ENCODE measurements at regions of chr13 and their contacts with region 1.

Region 1: DNA sequence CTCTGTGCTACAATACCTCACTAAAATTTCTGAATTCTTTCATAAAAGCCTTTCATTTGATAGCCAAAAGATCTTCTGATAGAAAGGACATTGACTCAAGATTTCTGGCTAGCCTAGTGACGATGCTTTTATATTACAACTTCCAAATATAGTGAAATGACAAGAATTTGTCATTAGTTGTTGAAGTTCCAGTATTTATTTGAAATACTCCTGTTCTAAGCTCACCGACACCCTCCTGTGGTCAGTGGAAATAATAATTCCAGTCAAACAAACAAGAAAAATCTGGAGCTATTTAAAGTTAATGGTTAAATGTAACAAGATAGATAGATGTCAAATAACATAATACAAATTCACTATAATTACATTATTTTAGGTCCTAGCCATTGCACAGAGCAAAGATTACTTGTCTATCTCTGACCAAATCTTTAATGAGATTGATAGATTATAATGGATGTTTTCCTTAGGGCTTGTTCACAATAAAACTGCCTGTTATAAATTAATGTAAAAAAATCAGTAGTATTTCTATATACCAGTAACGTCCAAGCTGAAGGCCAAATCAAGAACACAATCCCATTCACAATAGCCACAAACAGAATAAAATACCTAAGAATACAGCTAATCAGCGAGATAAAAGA is 195.5 kb downstream of the RGCC start:
- DNase-seq: peak; percentile 55
- ATAC-seq: no peak
- H3K4me3 Mint-ChIP-seq: no peak overlapping the region
- H3K27ac Mint-ChIP-seq: no peak overlapping the region
- H3K4me1 Mint-ChIP-seq: peaks cover 23% of the 10 kb centered on the region
- H3K27me3 Mint-ChIP-seq: no peaks in the 10 kb centered on the region

Region 2: DNA sequence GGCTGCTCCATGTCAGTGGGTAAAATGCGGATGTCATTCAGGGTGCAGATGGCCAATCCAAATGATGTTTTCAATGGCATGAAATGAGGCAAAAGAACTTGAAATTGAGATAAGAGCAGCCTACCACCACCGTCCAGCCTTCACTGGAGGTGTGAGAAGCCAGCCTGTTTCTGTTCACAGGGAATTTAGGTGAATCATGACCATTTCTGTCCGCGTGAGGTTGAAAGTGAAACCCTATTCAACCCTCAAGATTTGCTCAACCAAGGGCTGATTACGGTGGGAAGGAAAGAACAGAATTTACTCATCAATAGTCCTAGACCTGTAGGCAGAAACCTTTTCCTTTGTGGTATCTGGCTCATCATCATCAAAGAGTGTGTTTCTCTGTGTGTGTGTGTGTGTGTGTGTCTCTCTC is 1626.7 kb before region 1 on chr13:
- CTCF ChIA-PET with region 1: no interaction called
- POLR2A ChIA-PET with region 1: no interaction called
- intact Hi-C with region 1: no loop called
- DNase-seq: peak; percentile 79
- ATAC-seq: peak; percentile 82
- H3K4me3 Mint-ChIP-seq: peak overlapping the region; percentile 25
- H3K27ac Mint-ChIP-seq: peak overlapping the region; percentile 28
- H3K4me1 Mint-ChIP-seq: peaks cover 48% of the 10 kb centered on the region
- H3K27me3 Mint-ChIP-seq: no peaks in the 10 kb centered on the region

Region 3: GRCh38 chr13:41352935-41353840 is 299.7 kb before region 1 on chr13:
- CTCF ChIA-PET with region 1: interaction called, 5 read pairs
- POLR2A ChIA-PET with region 1: no interaction called
- intact Hi-C with region 1: loop called (anchors 1 to 2 kb)
- DNase-seq: peak; percentile 55
- ATAC-seq: peak; percentile 54
- H3K4me3 Mint-ChIP-seq: no peak overlapping the region
- H3K27ac Mint-ChIP-seq: peak overlapping the region; percentile 78
- H3K4me1 Mint-ChIP-seq: peaks cover 55% of the 10 kb centered on the region
- H3K27me3 Mint-ChIP-seq: no peaks in the 10 kb centered on the region

Region 4: DNA sequence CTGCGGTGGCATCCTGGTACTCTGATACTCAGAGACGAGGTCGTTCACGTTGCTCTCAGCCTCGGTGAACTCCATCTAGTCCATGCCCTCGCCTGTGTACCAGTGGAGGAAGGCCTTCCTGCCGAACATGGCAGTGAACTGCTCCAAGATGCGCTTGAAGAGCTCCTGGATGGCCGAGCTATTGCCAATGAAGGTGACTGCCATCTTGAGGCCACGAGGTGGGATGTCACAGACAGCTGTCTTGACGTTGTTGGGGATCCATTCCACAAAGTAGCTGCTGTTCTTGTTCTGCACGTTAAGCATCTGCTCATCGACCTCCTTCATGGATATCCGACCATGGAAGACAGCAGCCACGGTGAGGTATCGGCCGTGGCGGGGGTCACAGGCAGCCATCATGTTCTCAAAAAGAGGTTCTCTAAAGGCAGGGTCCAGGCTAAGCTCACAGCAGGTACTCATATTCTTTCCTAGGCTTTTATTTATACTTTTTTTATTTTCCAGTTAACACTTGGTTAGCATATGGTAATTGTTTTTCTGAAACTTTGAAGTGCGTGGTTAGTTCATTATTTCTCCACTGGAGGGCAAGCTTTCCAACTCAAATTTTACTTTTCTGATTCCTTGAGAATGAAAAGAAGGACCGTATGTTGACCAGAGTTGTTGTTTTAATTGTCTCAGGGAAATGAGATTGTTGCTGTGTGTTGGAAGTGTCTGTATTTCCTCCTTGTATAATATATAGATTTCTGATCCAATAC is 267.9 kb before region 1 on chr13:
- CTCF ChIA-PET with region 1: interaction called, 7 read pairs
- POLR2A ChIA-PET with region 1: no interaction called
- intact Hi-C with region 1: loop called in 1 of 2 experiments (anchors 10 kb)
- DNase-seq: peak; percentile 9
- ATAC-seq: no peak
- H3K4me3 Mint-ChIP-seq: no peak overlapping the region
- H3K27ac Mint-ChIP-seq: no peak overlapping the region
- H3K4me1 Mint-ChIP-seq: peaks cover 26% of the 10 kb centered on the region
- H3K27me3 Mint-ChIP-seq: no peaks in the 10 kb centered on the region

Region 5: DNA sequence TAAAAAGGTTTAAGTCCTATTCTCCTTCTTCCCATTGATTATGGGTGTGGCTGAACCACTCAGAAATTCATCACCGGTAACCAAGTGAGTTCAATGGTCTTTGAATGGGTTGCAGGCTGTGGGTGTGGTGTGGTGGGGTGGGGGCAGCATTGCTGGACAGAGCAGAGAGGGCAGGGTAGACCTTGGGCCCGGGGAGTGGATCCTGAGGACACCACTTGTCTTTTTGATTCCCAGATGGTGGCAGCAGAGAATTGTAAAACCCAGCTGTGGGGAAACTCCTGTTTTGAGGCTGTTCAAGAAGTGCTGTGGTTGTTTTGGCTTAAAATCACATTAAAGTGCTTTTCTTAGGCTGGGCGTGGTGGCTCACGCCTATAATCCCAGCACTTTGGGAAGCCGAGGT is 241.3 kb before region 1 on chr13:
- CTCF ChIA-PET with region 1: interaction called, 6 read pairs
- POLR2A ChIA-PET with region 1: no interaction called
- intact Hi-C with region 1: loop called (anchors 1 to 2 kb)
- DNase-seq: peak; percentile 42
- ATAC-seq: peak; percentile 65
- H3K4me3 Mint-ChIP-seq: no peak overlapping the region
- H3K27ac Mint-ChIP-seq: no peak overlapping the region
- H3K4me1 Mint-ChIP-seq: peaks cover 2% of the 10 kb centered on the region
- H3K27me3 Mint-ChIP-seq: no peaks in the 10 kb centered on the region

Region 6: GRCh38 chr13:41428155-41428554 is 224.7 kb before region 1 on chr13:
- CTCF ChIA-PET with region 1: no interaction called
- POLR2A ChIA-PET with region 1: no interaction called
- intact Hi-C with region 1: loop called in 1 of 2 experiments (anchors 5 kb)
- DNase-seq: peak; percentile 65
- ATAC-seq: peak; percentile 75
- H3K4me3 Mint-ChIP-seq: no peak overlapping the region
- H3K27ac Mint-ChIP-seq: no peak overlapping the region
- H3K4me1 Mint-ChIP-seq: peaks cover 6% of the 10 kb centered on the region
- H3K27me3 Mint-ChIP-seq: peaks cover 3% of the 10 kb centered on the region

Region 7: DNA sequence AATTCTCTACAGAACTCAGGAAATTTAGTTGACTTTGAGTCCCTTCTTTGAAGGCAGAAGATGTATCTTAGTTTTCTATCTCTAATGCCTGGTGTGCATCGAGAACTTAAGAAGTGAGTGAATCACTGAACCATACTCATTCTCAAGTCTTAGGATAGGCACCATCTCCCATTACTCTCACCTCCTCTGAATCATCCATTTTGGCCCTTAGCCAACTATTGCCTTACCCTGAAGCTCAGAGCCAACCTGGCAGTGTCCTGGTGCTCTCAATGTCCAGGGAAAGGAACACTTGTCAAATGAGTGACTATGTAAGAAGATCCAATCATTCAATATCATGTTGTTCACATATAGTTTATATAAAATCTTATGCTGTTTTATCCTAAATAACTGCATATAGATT is 48.9 kb before region 1 on chr13:
- CTCF ChIA-PET with region 1: no interaction called
- POLR2A ChIA-PET with region 1: no interaction called
- intact Hi-C with region 1: no loop called
- DNase-seq: peak; percentile 8
- ATAC-seq: peak; percentile 71
- H3K4me3 Mint-ChIP-seq: no peak overlapping the region
- H3K27ac Mint-ChIP-seq: no peak overlapping the region
- H3K4me1 Mint-ChIP-seq: no peaks in the 10 kb centered on the region
- H3K27me3 Mint-ChIP-seq: no peaks in the 10 kb centered on the region

Region 8: DNA sequence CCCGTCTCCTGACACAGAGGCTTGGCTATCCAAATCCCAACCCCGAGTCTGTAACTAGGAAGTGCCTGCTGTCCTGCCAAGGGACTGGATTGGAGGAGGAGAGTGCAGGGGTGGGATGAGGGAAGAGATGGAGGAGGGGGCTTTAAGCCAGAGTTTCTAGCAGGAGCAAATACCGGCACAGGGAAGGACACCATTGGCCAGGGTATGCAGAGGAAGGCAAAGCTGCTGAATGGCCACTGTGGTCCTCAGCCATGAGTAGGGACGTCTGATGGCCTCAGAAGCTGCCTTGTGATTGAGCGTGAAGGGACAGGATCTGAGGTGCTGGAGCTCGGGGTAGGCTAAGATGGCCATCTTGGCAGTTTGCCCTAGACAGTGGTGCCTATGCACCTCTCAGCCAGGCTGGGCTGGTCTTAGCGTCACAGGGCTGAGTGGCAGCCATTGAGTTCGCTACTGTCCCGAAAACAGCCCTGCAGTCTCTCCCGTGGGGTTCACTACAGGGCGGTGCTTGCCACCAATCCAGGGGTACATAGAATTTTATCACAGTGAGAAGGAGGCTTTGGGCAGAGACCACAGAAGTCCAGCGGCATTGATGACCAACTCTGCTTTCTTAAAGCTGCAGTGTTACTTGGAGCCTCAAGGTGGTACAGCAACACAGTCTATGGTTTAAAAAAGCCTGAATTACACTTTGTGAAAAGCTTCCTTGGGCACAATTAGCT is 680.9 kb after region 1 on chr13:
- CTCF ChIA-PET with region 1: no interaction called
- POLR2A ChIA-PET with region 1: no interaction called
- intact Hi-C with region 1: no loop called
- DNase-seq: no peak
- ATAC-seq: peak; percentile 79
- H3K4me3 Mint-ChIP-seq: no peak overlapping the region
- H3K27ac Mint-ChIP-seq: peak overlapping the region; percentile 76
- H3K4me1 Mint-ChIP-seq: peaks cover 41% of the 10 kb centered on the region
- H3K27me3 Mint-ChIP-seq: no peaks in the 10 kb centered on the region

Measured in activated CD4-positive, alpha-beta T cell treated with anti-CD3 and anti-CD28 coated beads for 36 hours (primary cell).